Dendritic cell treated with granulocyte-macrophage colony-stimulating factor and Interleukin-4, amounts not matched to agents 40 ng/mL and 50 ng/mL, for 4 days (primary cell): ENCODE measurements at regions of chr3 and their contacts with region 1.

Region 1: GRCh38 chr3:72938471-72939265 is 50.8 kb downstream of the GXYLT2 start:
- H3K4me3 Mint-ChIP-seq: no peak overlapping the region
- H3K27ac Mint-ChIP-seq: no peak overlapping the region
- H3K4me1 Mint-ChIP-seq: peaks cover 6% of the 10 kb centered on the region
- H3K27me3 Mint-ChIP-seq: no peaks in the 10 kb centered on the region

Region 2: GRCh38 chr3:72996473-72997333 is 58.0 kb after region 1 on chr3 and contains the start of gene PPP4R2:
- intact Hi-C with region 1: loop called (anchors 2 kb)
- H3K4me3 Mint-ChIP-seq: peak within 1 kb of the TSS; percentile 86
- H3K27ac Mint-ChIP-seq: peak within 1 kb of the TSS; percentile 93
- H3K4me1 Mint-ChIP-seq: peaks cover 34% of the 10 kb centered on the region
- H3K27me3 Mint-ChIP-seq: no peaks in the 10 kb centered on the region

Region 3: DNA sequence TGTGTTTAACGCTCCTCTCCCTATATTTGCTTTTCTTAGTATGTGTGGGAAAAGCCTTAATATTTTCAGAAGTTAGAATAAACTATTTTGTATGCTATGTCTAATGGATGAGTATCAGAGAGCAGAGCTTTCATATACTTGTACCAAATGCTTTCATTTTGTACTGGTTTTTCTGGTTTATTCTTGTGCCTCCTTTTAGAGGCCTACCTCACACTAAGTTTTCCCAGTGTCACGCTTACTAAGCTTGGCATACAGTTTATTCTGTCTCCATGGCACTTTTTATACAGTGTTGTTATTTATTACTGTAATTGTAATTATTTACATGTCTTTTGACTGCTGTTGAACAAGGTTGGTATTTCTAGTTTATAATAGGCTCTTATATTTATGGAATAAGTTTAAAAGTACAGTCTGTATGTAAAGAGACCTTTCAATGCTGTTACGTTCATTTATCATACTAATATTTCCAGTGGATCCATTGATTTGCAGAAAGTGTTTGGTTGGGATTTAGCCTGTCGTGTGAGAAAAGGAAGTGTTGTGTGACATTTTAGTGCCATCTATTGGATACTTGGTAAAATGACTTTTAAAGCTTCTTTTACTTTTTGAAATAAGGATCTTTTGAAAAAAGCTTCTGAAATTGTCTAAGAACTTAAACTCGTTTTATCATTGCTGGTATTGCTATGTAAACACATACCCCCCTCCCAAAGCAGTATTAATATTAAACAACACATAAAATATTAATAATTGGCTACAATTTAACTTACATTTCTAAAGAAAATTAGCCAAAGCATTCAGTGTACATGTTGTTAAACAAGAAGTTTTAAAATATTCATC is 117.6 kb after region 1 on chr3:
- intact Hi-C with region 1: loop called (anchors 1 kb)
- H3K4me3 Mint-ChIP-seq: no peak overlapping the region
- H3K27ac Mint-ChIP-seq: no peak overlapping the region
- H3K4me1 Mint-ChIP-seq: peaks cover 17% of the 10 kb centered on the region
- H3K27me3 Mint-ChIP-seq: no peaks in the 10 kb centered on the region

Region 4: DNA sequence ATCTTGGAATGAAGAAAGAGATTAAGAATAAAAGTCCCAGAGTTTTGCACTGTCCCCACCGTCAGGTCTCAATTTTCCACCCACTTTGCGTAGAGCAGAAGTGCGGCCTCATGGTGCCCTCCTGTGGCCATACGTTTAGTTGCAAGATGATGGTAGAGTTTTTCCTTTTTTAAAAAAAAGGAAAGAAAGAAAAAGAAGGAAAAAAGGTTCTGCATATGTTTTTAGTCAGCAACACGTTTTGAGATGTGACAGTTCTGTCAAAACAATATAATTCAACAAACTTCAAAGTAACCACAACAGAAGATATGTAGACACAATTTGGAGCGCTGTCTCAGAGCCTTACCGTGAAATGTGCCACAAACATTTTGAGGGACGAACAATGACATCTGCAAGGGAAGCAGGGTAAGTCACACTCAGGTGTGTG is 147.4 kb after region 1 on chr3:
- intact Hi-C with region 1: loop called (anchors 1 kb)
- H3K4me3 Mint-ChIP-seq: no peak overlapping the region
- H3K27ac Mint-ChIP-seq: no peak overlapping the region
- H3K4me1 Mint-ChIP-seq: no peaks in the 10 kb centered on the region
- H3K27me3 Mint-ChIP-seq: no peaks in the 10 kb centered on the region